GM10248 (cell line): ENCODE measurements at regions of chr4 and their contacts with region 1.

Region 1: GRCh38 chr4:164731827-164732474 is 22.0 kb upstream of the SMIM31 start:
- DNase-seq: peak; percentile 50
- CTCF ChIP-seq: peak; percentile 89

Region 2: DNA sequence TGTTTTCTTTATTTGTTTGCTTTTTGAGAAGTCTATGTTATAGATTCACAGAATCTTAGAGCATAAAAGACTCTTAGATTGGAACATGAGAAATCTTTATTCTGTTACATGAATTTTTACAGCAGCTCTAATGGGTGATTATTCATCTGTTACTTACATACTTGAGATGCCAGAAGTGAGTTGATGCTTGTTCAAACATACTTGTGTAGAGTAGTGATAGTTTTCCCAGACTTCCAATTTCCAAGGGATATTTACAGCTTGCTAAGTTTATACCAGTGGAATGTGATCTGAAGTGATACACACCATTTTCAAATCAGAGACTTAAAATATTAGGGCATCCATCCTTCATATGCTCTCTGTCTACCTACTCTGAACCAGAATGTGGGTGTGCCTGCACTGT is 230.9 kb before region 1 on chr4:
- CTCF ChIA-PET with region 1: no interaction called
- POLR2A ChIA-PET with region 1: no interaction called
- DNase-seq: no peak
- CTCF ChIP-seq: no peak

Region 3: DNA sequence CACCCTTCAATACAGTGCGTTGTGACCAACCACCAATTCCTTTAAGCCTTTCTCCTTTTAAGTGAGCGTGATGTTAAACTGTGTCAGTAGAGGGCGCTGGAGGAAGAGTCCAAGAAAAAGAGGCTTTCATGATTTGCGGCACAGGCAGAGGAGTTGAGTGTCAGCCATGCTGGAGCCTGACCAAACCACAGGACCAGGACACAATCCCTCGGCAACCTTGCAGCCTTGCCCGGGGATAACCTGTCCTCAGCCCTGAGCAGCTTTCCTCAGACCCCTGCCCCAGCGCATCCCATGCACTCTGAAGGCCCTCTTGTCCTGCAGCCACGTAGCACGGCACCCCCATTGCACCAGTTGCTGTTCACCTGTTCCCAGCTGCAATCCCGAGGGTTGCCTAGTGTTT is 31.5 kb before region 1 on chr4:
- CTCF ChIA-PET with region 1: interaction called, 23 read pairs
- POLR2A ChIA-PET with region 1: no interaction called
- DNase-seq: peak; percentile 10
- CTCF ChIP-seq: peak; percentile 25

Region 4: DNA sequence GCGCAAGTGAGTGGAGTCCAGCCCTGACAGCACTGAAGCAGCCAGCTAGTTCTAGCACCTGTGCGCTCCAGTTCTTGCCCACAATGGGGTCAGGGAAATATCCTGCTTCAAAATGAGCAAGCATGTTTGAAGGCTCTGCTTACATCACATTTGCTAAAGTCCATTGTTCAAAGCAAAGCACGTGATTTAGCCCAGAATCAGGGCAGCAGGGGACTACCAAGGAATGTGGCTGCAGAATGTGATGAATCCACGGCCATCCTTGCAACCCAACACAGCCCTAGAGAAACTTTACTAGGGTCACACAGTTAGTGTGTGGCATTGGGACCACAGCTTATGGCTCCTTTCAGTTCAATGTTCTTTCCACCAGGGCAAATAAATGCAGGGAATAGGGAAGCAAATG is 25.3 kb before region 1 on chr4:
- CTCF ChIA-PET with region 1: interaction called, 23 read pairs
- POLR2A ChIA-PET with region 1: no interaction called
- DNase-seq: no peak
- CTCF ChIP-seq: no peak

Region 5: GRCh38 chr4:164716901-164717300 is 15.1 kb before region 1 on chr4:
- CTCF ChIA-PET with region 1: interaction called, 50 read pairs
- POLR2A ChIA-PET with region 1: no interaction called
- DNase-seq: no peak
- CTCF ChIP-seq: no peak

Region 6: DNA sequence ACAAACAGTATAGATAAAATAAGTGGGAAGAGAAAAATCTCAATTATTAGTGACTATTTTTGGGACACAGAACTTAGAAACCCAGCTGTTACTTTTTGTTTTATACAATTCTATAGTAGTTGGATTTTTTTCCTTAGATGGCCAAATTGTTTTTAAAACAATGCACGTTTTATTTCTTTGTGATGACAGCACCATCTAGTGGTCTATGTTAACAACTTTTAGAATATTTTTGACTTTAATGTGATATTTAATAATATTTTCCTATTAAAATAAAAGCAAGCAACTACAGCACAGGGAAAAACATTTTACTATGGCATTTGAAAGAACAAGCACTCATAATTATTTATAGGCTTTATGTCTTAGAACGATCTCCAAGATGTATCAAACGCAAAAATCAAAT is 16.4 kb after region 1 on chr4:
- CTCF ChIA-PET with region 1: interaction called, 30 read pairs
- POLR2A ChIA-PET with region 1: no interaction called
- DNase-seq: peak; percentile 16
- CTCF ChIP-seq: peak; percentile 7